HCT116 (cell line): ENCODE measurements at regions of chr1 and their contacts with region 1.

Region 1: DNA sequence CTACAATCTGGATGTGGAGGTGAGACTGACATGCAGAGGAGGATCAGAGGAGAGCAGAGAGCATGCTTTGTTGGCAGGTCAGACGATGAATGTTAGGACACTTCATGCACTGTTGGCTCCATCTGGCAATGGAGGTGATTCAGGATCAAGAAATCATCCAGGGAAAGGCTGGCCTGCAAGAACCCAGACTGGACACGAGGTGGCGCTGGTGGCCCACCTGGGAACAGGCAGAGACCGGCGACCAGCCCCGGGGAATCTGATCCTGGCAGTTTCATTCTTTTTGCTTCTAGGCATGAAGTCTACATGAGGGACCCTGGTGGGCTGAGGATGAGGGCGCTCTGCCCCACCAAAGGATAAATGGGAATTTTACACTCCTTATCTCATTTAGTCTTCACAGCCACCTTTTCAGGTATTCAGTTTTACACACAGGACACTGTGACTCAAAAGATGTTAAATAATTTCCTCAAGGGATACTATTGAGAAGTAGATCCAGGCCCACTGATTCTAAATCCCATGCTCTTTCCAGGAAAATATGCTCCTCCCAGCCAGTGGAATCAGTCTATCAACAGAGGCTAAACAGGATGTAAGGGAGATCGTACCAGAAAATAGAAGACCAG is 26.2 kb upstream of the SCMH1 start:
- DNase-seq: peak; percentile 50
- ATAC-seq: peak; percentile 96
- H3K4me3 ChIP-seq: no peak overlapping the region
- H3K27ac ChIP-seq: no peak overlapping the region
- H3K4me1 ChIP-seq: peaks cover 0 to 2% of the 10 kb centered on the region in 2 experiments; a peak in 1 of 4 replicates
- H3K27me3 ChIP-seq: no peaks in the 10 kb centered on the region
- CTCF ChIP-seq: peak; percentile 89 to 96 (median 93)
- POLR2A ChIP-seq: no peak
- RAD21 ChIP-seq: peak; percentile 96

Region 2: GRCh38 chr1:41432481-41433280 is 164.4 kb after region 1 on chr1:
- CTCF ChIA-PET with region 1: interaction called, 5 read pairs
- POLR2A ChIA-PET with region 1: no interaction called
- RAD21 ChIA-PET with region 1: no interaction called
- intact Hi-C with region 1: loop called (anchors 1 kb)
- DNase-seq: peak; percentile 75
- ATAC-seq: peak; percentile 96
- H3K4me3 ChIP-seq: peak overlapping the region in 1 of 2 experiments; percentile 28; a peak in 2 of 4 replicates
- H3K27ac ChIP-seq: peak overlapping the region; percentile 10; the same call in 1 of the 2 replicates
- H3K4me1 ChIP-seq: peaks cover 14 to 22% of the 10 kb centered on the region in 2 experiments
- H3K27me3 ChIP-seq: peaks cover 16% of the 10 kb centered on the region; the same call in 1 of the 2 replicates
- CTCF ChIP-seq: peak; percentile 85 to 96 (median 92)
- POLR2A ChIP-seq: no peak
- RAD21 ChIP-seq: peak; percentile 99